Activated naive CD4-positive, alpha-beta T cell treated with anti-CD3 and anti-CD28 coated beads for 36 hours (primary cell): ENCODE measurements at regions of chr10 and their contacts with region 1.

Region 1: DNA sequence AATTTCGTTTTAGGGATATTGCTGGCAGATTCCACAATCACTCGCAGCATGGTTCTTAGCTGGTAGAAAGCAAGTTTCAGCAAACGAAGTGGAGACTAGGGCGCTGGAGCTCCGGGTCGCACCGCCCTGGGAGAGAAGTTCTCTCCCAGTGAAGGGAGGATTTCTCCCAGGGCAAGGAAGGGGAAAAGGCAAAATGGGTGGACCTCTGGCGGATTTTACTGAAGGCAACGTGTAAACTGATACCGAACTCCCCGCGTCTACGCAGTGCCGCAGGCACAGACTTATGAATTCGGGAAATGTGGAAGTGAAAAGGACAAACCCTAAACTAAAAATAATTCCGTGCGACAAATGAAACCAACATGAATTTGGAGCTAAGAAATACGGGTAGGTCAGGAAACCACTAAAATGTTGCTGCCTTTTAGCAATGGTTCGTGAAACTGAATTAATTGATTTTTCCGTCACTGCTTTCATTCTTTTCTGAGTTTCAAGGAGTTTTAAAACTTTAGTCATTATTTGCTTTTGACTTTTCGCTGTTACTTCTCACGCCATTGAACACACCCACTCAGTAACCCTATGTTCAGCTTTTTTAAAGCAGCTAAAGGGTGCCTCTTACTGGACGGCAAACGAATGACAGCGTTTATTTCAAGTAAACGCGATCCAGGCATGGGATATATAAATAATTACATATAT is at the start of gene MYOF:
- DNase-seq: peak; percentile 76
- H3K4me3 Mint-ChIP-seq: peak within 1 kb of the TSS; percentile 84
- H3K27ac Mint-ChIP-seq: peak within 1 kb of the TSS; percentile 81
- H3K4me1 Mint-ChIP-seq: peaks cover 20% of the 10 kb centered on the region
- H3K27me3 Mint-ChIP-seq: peaks cover 3% of the 10 kb centered on the region
- total RNA-seq, gene MYOF: 10.4 to 10.5 TPM

Region 2: DNA sequence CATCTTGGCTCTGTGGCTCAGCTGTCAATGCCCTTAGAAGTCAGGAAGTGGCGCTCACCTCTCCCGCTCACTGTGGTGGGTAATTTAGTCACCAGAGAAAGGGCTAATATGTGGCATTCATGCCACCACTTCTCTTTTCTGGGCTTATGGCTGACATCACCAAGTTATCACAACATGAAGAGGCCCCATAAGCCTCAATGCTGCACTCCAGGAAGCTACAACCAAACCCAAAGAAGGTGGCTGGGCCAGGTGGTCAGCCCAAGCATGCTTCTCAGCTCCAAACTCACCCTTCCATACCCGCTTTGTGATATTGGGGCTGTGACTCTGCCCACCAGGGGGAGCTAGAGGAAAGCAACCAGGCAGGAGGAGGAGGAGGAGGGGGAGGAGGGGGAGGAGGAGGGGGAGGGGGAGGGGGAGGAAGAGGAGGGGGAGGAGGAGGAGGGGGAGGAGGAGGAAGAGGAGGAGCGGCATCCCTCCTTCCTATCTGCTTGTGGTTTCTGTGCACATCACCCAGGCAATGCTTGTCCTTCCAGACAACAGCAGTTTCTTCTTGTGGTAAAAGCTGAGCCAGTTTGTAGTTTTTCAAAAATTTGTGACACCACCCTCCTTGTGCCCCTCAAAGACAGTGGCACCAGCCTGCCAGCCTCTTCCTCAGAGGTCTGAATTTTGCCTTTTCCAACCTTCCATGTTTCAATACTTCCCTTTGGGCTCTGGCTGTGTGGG is 366.5 kb before region 1 on chr10:
- CTCF ChIA-PET with region 1: interaction called, 5 read pairs
- intact Hi-C with region 1: loop called (anchors 1 kb)
- DNase-seq: peak; percentile 86
- H3K4me3 Mint-ChIP-seq: no peak overlapping the region
- H3K27ac Mint-ChIP-seq: no peak overlapping the region
- H3K4me1 Mint-ChIP-seq: peaks cover 11% of the 10 kb centered on the region
- H3K27me3 Mint-ChIP-seq: no peaks in the 10 kb centered on the region

Region 3: DNA sequence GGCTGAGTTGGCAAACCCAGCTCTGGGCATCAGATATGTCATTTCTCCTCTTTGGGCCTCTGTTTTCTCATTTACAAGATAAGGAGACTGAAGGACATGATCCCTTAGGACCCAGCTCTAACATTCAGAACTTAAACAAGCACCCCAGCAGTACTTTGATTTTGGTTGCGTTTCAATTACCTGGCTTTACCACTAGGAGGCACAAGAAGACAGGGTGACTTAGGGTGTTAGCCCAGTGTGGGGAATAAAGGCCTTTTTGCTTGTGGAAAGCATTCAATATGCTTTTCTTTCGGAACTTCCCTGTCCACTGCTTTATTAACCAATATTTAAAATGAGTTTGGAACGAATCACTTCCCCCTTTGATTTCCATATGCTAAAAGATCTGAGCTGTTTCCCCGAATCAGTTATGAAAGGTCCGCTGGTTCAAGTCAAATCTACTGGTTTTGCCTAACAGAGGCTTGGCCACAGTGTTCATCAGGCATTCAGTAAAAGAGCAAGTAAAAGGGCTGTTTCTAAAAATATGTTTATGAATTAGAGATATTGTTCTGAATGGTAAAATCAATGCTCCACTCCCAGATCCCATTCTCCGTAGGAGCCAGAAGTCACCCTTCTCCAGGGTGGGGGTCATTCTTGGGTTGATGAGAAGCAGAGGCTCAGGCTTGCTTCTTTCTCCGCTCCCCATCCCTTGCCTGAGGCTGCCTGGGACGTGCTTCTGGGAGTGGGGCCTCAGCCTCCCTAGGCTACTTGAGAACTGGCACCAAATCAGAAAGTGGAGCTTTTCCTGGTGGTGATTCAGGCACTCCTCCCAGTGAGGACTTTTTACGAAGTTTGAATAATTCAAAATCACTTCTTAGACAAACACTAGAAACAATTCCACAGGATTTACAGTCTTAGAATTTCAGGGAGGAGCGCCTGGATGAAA is 105.7 kb before region 1 on chr10:
- CTCF ChIA-PET with region 1: interaction called, 331 read pairs
- intact Hi-C with region 1: loop called (anchors 1 kb)
- DNase-seq: peak; percentile 62
- H3K4me3 Mint-ChIP-seq: no peak overlapping the region
- H3K27ac Mint-ChIP-seq: no peak overlapping the region
- H3K4me1 Mint-ChIP-seq: peaks cover 35% of the 10 kb centered on the region
- H3K27me3 Mint-ChIP-seq: peaks cover 5% of the 10 kb centered on the region

Region 4: GRCh38 chr10:93471110-93471651 is 11.1 kb before region 1 on chr10:
- CTCF ChIA-PET with region 1: interaction called, 20 read pairs
- intact Hi-C with region 1: loop called (anchors 1 kb)
- DNase-seq: peak; percentile 18
- H3K4me3 Mint-ChIP-seq: no peak overlapping the region
- H3K27ac Mint-ChIP-seq: no peak overlapping the region
- H3K4me1 Mint-ChIP-seq: peaks cover 18% of the 10 kb centered on the region
- H3K27me3 Mint-ChIP-seq: no peaks in the 10 kb centered on the region

Region 5: DNA sequence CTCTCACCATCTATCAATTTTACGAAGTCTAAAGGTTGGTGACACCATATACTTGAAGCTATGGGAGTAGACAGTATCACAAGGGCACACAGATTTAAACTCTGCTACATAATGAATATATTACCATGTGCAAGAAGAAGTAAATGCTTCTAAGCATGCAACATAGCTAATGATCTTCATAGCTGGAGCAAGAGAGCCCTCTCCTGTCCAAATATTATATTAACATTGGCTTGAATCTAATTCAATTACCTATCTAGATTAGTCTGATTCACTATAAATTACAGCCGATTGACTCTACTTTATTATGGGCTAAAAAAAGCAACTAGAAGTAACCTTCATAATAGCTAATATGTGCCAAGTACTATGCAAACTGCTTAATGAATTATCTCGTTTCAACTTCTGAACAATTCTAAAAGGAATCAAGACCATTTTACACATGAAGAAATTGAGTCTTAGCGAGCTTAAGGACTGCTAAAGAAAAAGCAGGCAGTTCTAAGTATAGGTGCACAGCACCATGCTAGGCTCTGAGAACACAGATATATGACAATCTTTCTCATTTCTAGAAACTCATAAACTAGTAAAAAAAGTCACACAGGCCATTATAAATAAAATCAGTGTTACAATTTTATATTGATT is 198.2 kb after region 1 on chr10:
- CTCF ChIA-PET with region 1: interaction called, 6 read pairs
- intact Hi-C with region 1: loop called (anchors 2 kb)
- DNase-seq: no peak
- H3K4me3 Mint-ChIP-seq: no peak overlapping the region
- H3K27ac Mint-ChIP-seq: no peak overlapping the region
- H3K4me1 Mint-ChIP-seq: peaks cover 7% of the 10 kb centered on the region
- H3K27me3 Mint-ChIP-seq: no peaks in the 10 kb centered on the region

Region 6: DNA sequence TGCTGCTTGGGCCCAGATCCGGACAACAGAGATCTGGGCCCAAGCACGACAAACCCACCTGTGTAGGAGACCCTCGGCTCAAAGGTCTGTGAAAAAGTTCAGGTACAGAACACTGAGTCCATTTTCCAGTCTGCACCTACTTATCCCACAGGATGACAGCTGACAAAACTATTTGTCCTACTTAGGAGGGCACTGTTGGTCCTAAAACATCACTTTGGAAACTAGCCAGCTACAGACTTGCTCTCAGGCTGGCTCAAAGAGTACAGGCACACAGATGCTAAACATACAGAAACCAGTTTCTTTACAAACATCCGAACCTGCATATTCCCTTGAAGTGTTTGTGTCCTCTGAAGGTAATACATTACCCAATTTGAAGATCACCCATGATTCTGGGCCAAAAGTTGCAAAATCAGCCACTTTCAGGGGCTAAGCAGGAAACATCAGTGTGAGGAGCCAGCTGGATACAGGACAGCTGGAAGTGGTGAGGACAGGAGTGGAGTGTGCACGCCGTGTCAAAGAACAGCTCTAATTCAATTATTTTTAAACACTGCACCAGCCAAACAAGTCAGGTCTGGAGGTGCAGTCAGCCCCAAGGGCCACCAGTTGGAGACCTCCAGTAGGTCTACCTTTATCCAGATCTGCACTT is 792.0 kb after region 1 on chr10:
- CTCF ChIA-PET with region 1: no interaction called
- intact Hi-C with region 1: no loop called
- DNase-seq: no peak
- H3K4me3 Mint-ChIP-seq: no peak overlapping the region
- H3K27ac Mint-ChIP-seq: no peak overlapping the region
- H3K4me1 Mint-ChIP-seq: no peaks in the 10 kb centered on the region
- H3K27me3 Mint-ChIP-seq: no peaks in the 10 kb centered on the region